ENCODE measurements at regions of chr13 and their contacts with region 1.

Region 1: GRCh38 chr13:73765651-73766384 is 368.4 kb downstream of the KLF12 start:
- DNase-seq: peak; percentile 84
- ATAC-seq: peak; percentile 89
- H3K4me3 Mint-ChIP-seq: peak overlapping the region; percentile 77
- H3K27ac Mint-ChIP-seq: peak overlapping the region; percentile 97
- H3K4me1 Mint-ChIP-seq: peaks cover 50% of the 10 kb centered on the region
- H3K27me3 Mint-ChIP-seq: no peaks in the 10 kb centered on the region

Region 2: GRCh38 chr13:73722120-73722519 is 43.7 kb before region 1 on chr13:
- CTCF ChIA-PET with region 1: interaction called, 13 read pairs
- POLR2A ChIA-PET with region 1: no interaction called
- DNase-seq: no peak
- ATAC-seq: no peak
- H3K4me3 Mint-ChIP-seq: no peak overlapping the region
- H3K27ac Mint-ChIP-seq: no peak overlapping the region
- H3K4me1 Mint-ChIP-seq: peaks cover 11% of the 10 kb centered on the region
- H3K27me3 Mint-ChIP-seq: no peaks in the 10 kb centered on the region

Region 3: DNA sequence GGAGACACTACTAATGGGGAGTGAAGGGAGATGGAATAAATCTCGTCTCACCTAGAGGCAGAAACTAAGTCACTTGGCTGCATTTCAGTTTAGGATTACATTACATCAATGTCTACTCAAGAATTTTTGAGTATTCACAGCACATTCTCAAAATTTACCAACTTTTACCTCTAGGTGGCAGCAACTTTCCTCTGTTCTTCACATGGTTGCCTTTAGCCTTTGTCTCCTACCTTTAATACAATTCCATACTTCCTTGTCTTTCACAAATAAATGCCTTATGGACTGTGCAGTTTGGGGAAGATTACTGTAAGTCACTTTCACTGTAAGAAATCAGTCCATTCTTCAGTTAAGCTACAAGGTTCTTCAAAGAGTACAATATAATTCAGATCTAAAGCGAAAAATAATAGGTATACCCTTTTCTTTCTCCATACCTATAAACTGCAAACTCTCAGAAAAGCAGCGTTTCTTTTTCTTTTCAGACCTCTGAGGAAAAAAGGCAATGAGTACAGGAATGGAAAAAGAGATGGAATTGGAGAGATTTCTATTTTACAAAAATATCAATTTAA is 11.0 kb before region 1 on chr13:
- CTCF ChIA-PET with region 1: interaction called, 38 read pairs
- POLR2A ChIA-PET with region 1: no interaction called
- DNase-seq: peak; percentile 47
- ATAC-seq: peak; percentile 63
- H3K4me3 Mint-ChIP-seq: no peak overlapping the region
- H3K27ac Mint-ChIP-seq: peak overlapping the region; percentile 58
- H3K4me1 Mint-ChIP-seq: peaks cover 14% of the 10 kb centered on the region
- H3K27me3 Mint-ChIP-seq: no peaks in the 10 kb centered on the region

Region 4: GRCh38 chr13:73903561-73903960 is 137.7 kb after region 1 on chr13:
- CTCF ChIA-PET with region 1: no interaction called
- POLR2A ChIA-PET with region 1: no interaction called
- DNase-seq: no peak
- ATAC-seq: no peak
- H3K4me3 Mint-ChIP-seq: no peak overlapping the region
- H3K27ac Mint-ChIP-seq: no peak overlapping the region
- H3K4me1 Mint-ChIP-seq: no peaks in the 10 kb centered on the region
- H3K27me3 Mint-ChIP-seq: no peaks in the 10 kb centered on the region

Measured in activated CD8-positive, alpha-beta T cell treated with anti-CD3 and anti-CD28 coated beads, Interleukin-2, amount 10 ng/mL, durations not matched to agents 7 days and 5 days (primary cell).